ENCODE measurements at regions of chr11 and their contacts with region 1.

Region 1: GRCh38 chr11:106714199-106714598 is 304.1 kb downstream of the GUCY1A2 start:
- DNase-seq: no peak
- ATAC-seq: no peak
- H3K4me3 ChIP-seq: no peak overlapping the region
- H3K27ac ChIP-seq: no peak overlapping the region
- H3K4me1 ChIP-seq: no peaks in the 10 kb centered on the region
- H3K27me3 ChIP-seq: no peaks in the 10 kb centered on the region
- CTCF ChIP-seq: no peak

Region 2: GRCh38 chr11:106990331-106990920 is 276.2 kb after region 1 on chr11:
- intact Hi-C with region 1: loop called in 1 of 10 experiments (anchors 5 kb)
- DNase-seq: peak; percentile 45 to 56
- ATAC-seq: peak; percentile 78 to 92 (median 86)
- H3K4me3 ChIP-seq: no peak overlapping the region
- H3K27ac ChIP-seq: peak overlapping the region in 7 of 10 donors; percentile 35 to 65 (median 50)
- H3K4me1 ChIP-seq: peaks cover 0 to 39% (median 7%) of the 10 kb centered on the region in 9 donors
- H3K27me3 ChIP-seq: no peaks in the 10 kb centered on the region
- CTCF ChIP-seq: no peak

Measured in heart right ventricle (tissue), 16 donors.